Activated CD4-positive, alpha-beta memory T cell treated with anti-CD3 and anti-CD28 coated beads for 36 hours (primary cell): ENCODE measurements at regions of chr17 and their contacts with region 1.

Region 1: DNA sequence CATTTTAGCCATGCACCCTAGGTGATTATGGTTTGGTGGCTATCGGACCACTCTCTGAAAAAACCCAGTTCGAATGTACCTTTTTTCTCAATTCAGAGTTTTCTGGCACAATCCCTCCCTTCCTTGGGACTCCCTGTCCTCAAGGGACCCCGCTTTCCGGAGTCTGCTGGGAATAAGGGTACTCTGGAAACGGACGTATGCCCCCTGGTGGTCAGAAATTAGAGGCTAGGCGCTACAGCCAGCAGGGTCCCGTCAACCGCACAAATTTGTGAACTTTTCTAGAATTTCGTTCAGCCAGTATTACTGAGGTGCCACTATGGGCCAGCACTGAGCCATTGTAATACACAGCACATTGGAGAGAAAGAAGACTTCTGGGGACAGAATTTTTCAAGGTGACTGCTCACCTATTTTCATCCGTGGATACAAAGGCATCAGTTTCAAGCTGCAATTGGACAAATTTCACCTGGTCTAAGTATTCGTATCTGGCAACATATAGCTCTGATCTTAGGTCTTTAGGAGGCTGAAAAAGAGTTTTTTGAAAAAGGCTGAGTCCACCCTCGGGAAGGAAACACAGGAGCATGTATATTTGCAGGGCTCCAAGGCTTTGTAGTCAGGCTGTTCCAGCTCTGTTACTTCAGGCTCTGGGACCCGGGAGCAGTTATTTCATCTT is 27.1 kb upstream of the CRYBA1 start:
- DNase-seq: peak; percentile 80
- H3K4me3 Mint-ChIP-seq: no peak overlapping the region
- H3K27ac Mint-ChIP-seq: no peak overlapping the region
- H3K4me1 Mint-ChIP-seq: no peaks in the 10 kb centered on the region
- H3K27me3 Mint-ChIP-seq: no peaks in the 10 kb centered on the region

Region 2: GRCh38 chr17:29116804-29117772 is 102.4 kb before region 1 on chr17:
- CTCF ChIA-PET with region 1: interaction called, 21 read pairs
- POLR2A ChIA-PET with region 1: no interaction called
- intact Hi-C with region 1: no loop called
- DNase-seq: peak; percentile 87
- H3K4me3 Mint-ChIP-seq: no peak overlapping the region
- H3K27ac Mint-ChIP-seq: no peak overlapping the region
- H3K4me1 Mint-ChIP-seq: peaks cover 4% of the 10 kb centered on the region
- H3K27me3 Mint-ChIP-seq: no peaks in the 10 kb centered on the region

Region 3: GRCh38 chr17:29155227-29155965 is 64.1 kb before region 1 on chr17:
- CTCF ChIA-PET with region 1: interaction called, 247 read pairs
- POLR2A ChIA-PET with region 1: interaction called, 3 read pairs
- intact Hi-C with region 1: no loop called
- DNase-seq: peak; percentile 84
- H3K4me3 Mint-ChIP-seq: peak overlapping the region; percentile 52
- H3K27ac Mint-ChIP-seq: peak overlapping the region; percentile 79
- H3K4me1 Mint-ChIP-seq: peaks cover 32% of the 10 kb centered on the region
- H3K27me3 Mint-ChIP-seq: no peaks in the 10 kb centered on the region

Region 4: DNA sequence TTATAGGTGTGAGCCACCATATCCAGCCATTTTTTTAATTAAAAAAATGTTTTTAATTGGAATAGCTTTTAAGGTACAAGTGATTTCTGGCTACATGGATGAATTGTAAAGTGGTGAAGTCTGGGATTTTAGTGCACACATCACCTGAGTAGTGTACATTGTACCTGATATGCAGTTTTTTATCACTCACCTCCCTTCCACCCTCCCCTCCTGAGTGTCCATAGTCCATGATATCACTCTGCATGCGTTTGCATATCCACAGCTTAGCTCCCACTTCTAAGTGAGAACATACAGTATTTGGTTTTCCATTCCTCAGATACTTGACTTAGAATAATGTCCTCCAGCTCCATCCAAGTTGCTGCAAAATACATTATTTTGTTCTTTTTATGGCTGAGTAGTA is 13.8 kb after region 1 on chr17:
- CTCF ChIA-PET with region 1: interaction called, 12 read pairs
- POLR2A ChIA-PET with region 1: no interaction called
- intact Hi-C with region 1: no loop called
- DNase-seq: no peak
- H3K4me3 Mint-ChIP-seq: no peak overlapping the region
- H3K27ac Mint-ChIP-seq: no peak overlapping the region
- H3K4me1 Mint-ChIP-seq: no peaks in the 10 kb centered on the region
- H3K27me3 Mint-ChIP-seq: no peaks in the 10 kb centered on the region

Region 5: DNA sequence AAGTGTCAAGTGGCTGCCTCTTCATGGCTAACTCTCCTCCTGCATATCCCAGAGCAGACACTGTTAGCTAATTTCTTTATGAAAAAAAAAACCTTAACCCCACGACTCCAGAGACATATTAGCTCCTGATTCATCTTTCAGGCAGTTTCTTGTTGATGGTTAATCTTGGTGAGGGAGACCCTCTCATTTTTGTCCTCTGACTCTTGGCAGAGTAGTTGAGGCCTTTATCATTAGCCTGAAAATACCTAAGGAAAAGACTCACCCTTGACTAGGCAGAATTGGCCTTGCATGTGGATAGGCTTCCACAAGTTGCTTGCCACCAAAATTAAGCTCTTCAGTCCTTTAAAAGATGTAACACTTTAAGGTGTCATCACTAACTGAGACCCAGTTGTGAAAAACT is 31.2 kb after region 1 on chr17:
- CTCF ChIA-PET with region 1: interaction called, 10 read pairs
- POLR2A ChIA-PET with region 1: no interaction called
- intact Hi-C with region 1: no loop called
- DNase-seq: no peak
- H3K4me3 Mint-ChIP-seq: no peak overlapping the region
- H3K27ac Mint-ChIP-seq: no peak overlapping the region
- H3K4me1 Mint-ChIP-seq: no peaks in the 10 kb centered on the region
- H3K27me3 Mint-ChIP-seq: no peaks in the 10 kb centered on the region